ENCODE measurements at regions of chr6 and their contacts with region 1.

Region 1: GRCh38 chr6:139219271-139219729 is 72.5 kb downstream of the TXLNB start:
- H3K4me3 Mint-ChIP-seq: no peak overlapping the region
- H3K27ac Mint-ChIP-seq: peak overlapping the region; percentile 65
- H3K4me1 Mint-ChIP-seq: peaks cover 7% of the 10 kb centered on the region
- H3K27me3 Mint-ChIP-seq: no peaks in the 10 kb centered on the region

Region 2: GRCh38 chr6:138817822-138818308 is 401.4 kb before region 1 on chr6:
- intact Hi-C with region 1: loop called (anchors 5 kb)
- H3K4me3 Mint-ChIP-seq: no peak overlapping the region
- H3K27ac Mint-ChIP-seq: no peak overlapping the region
- H3K4me1 Mint-ChIP-seq: peaks cover 13% of the 10 kb centered on the region
- H3K27me3 Mint-ChIP-seq: no peaks in the 10 kb centered on the region

Region 3: DNA sequence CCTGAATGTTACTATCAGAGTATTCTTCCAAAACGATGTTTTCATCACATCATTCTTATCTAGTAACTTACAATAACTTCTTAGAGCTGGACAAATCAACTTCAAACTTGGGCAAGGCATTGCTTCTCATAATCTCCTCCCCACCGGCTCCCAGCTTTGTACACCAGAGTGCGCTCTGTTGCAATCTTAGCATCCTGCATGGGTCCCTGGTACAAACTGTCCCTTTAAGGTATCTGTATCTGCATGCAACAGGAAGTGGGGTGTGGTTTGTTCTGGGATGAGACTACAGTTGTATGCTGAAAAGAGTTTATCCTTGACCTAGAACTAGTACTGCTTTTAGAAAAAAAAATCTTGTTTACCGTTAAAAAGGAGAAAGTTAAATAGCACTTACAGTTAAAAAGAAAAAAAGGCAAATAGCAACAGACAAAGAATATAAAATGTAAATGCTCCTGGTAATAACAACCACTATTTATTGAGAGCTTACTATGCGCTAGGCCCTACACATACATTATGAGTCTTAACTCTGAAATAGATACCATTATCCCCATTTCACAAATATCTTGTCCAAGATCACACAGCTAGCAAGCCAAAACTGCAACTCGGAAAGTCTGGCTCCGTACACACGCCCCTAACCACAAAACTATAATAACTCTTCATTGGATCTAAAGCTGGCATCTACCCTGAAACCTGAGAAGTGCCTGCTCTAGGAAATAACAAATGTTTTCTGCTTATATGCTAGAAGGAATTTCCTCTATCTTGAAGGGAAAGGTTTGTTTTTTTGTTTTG is 94.2 kb before region 1 on chr6:
- intact Hi-C with region 1: loop called (anchors 2 kb)
- H3K4me3 Mint-ChIP-seq: no peak overlapping the region
- H3K27ac Mint-ChIP-seq: peak overlapping the region; percentile 65
- H3K4me1 Mint-ChIP-seq: peaks cover 26% of the 10 kb centered on the region
- H3K27me3 Mint-ChIP-seq: no peaks in the 10 kb centered on the region